ENCODE measurements at regions of chr15 and their contacts with region 1.

Region 1: GRCh38 chr15:68559345-68560310 is 19.2 kb upstream of the CORO2B start:
- DNase-seq: peak; percentile 66 to 89 (median 82)
- ATAC-seq: peak; percentile 98
- H3K4me3 ChIP-seq: no peak overlapping the region
- H3K27ac ChIP-seq: no peak overlapping the region
- H3K4me1 ChIP-seq: peaks cover 0 to 7% of the 10 kb centered on the region in 2 experiments; a peak in 2 of 5 replicates
- H3K27me3 ChIP-seq: peaks cover 2 to 45% of the 10 kb centered on the region in 2 experiments; a peak in 3 of 5 replicates
- CTCF ChIP-seq: peak; percentile 78 to 90 (median 86)
- EP300 ChIP-seq: no peak
- POLR2A ChIP-seq: no peak
- RAD21 ChIP-seq: peak; percentile 70 to 85

Region 2: DNA sequence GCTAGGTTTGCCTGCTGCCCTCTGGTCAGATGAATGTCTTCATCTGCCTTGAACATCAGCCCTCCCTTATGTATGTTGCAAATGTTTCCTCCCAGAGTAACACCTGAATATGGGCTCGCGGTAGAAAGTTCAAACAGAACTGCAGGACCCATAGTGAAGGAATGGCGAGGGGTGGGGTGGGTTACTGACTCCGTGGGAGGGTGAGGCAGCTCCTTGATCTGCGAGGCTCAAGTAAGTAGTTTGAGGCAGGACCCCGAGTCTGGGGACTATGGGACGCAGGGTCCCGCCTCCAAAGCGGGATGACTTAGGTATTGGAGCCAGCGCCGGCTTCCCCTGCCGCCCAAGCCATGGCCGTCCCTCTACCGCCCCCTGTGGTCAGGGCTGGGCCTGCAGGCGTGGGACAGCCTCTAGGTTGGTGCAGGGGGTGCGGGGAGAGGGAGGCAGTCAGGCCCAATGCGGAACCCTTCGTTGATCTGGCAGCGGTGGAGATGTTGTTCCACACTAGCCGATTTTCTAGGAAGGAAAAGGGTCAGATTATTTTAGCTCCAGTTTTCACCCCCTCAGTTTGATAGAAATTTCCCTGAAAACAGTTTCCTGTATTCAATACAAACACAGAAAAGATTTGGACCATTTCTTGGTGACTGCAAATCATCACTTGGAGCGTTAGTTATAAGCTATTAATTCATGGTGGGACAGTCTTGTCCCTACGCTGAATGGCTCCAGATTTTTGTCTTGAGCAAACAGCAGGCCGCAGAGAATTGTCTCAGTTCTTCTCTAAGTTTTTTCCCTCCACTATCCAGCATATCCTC is 91.5 kb after region 1 on chr15:
- CTCF ChIA-PET with region 1: interaction called, 3 read pairs
- POLR2A ChIA-PET with region 1: no interaction called
- in situ Hi-C with region 1: no loop called
- intact Hi-C with region 1: loop called (anchors 1 kb)
- DNase-seq: peak; percentile 70 to 91 (median 84)
- ATAC-seq: peak; percentile 99
- H3K4me3 ChIP-seq: no peak overlapping the region
- H3K27ac ChIP-seq: no peak overlapping the region
- H3K4me1 ChIP-seq: peaks cover 0 to 3% of the 10 kb centered on the region in 2 experiments; a peak in 1 of 5 replicates
- H3K27me3 ChIP-seq: peaks cover 17 to 47% of the 10 kb centered on the region in 2 experiments; a peak in 3 of 5 replicates
- CTCF ChIP-seq: peak; percentile 89 to 91 (median 91)
- EP300 ChIP-seq: no peak
- POLR2A ChIP-seq: no peak
- RAD21 ChIP-seq: peak; percentile 52 to 69

Region 3: DNA sequence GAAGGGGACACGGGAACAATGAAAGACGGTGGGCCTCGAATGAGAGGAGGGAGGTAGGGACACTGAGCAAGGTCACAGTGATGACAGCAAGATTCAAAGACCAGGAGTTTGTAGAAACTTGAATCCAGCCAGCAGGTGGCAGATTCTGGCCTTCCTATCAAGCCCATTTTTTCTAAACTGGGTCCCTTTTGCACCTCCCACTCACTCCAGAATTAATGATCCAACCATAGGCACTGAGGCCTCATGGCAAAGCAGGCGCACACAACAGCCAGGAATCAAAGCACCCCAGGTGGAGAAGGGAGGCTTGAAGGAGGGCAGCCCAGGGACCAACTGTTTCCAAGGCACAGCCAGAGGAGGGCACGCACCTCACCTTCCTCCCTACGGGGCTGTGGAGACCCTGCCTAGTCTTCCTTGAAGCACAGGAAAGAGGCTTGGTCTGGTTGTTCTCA is 170.9 kb after region 1 on chr15:
- CTCF ChIA-PET with region 1: no interaction called
- POLR2A ChIA-PET with region 1: no interaction called
- in situ Hi-C with region 1: no loop called
- intact Hi-C with region 1: loop called (anchors 10 kb)
- DNase-seq: peak in 3 of 4 experiments; percentile 23 to 52 (median 26)
- ATAC-seq: peak; percentile 79
- H3K4me3 ChIP-seq: no peak overlapping the region
- H3K27ac ChIP-seq: no peak overlapping the region
- H3K4me1 ChIP-seq: peaks cover 5 to 7% of the 10 kb centered on the region in 2 experiments; a peak in 4 of 5 replicates
- H3K27me3 ChIP-seq: peaks cover 28 to 62% of the 10 kb centered on the region in 2 experiments; a peak in 4 of 5 replicates
- CTCF ChIP-seq: peak; percentile 52 to 63 (median 53); a peak in 5 of 6 replicates
- EP300 ChIP-seq: no peak
- POLR2A ChIP-seq: no peak
- RAD21 ChIP-seq: peak; percentile 62 to 81